Posterior vena cava (tissue), 2 donors: ENCODE measurements at regions of chr4 and their contacts with region 1.

Region 1: DNA sequence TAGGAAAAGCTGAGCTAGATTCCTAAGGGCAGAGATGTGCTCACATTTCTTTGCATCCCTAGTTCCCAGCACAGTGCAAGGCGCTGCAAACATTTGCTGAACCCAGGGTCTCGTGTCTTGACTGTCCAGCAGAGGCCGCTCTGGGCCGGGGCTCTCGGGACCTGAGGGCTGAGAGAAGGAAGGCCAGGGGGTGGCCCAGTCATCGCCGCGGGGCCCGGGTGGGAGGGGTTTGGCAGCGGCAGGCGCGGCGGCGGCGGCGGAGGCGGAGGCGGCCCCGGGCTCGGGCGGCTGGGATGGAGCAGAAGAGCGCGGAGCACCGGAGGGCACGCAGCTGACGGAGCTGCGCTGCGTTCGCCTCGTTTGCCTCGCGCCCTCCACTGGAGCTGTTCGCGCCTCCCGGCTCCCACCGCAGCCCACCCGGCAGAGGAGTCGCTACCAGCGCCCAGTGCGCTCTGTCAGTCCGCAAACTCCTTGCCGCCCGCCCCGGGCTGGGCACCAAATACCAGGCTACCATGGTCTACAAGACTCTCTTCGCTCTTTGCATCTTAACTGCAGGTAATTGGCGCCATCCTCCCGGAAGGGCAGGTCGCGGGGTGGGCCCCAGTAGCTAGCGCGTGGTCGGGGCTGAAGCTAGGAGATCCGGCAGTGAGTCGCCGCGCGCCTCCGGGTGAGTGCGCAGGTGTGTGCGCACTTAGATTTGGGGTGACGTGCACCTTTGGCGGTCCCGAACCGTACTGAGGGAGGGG is at the start of gene PARM1:
- DNase-seq: peak; percentile 98
- total RNA-seq, gene PARM1: 94.5 to 113 TPM

Region 2: DNA sequence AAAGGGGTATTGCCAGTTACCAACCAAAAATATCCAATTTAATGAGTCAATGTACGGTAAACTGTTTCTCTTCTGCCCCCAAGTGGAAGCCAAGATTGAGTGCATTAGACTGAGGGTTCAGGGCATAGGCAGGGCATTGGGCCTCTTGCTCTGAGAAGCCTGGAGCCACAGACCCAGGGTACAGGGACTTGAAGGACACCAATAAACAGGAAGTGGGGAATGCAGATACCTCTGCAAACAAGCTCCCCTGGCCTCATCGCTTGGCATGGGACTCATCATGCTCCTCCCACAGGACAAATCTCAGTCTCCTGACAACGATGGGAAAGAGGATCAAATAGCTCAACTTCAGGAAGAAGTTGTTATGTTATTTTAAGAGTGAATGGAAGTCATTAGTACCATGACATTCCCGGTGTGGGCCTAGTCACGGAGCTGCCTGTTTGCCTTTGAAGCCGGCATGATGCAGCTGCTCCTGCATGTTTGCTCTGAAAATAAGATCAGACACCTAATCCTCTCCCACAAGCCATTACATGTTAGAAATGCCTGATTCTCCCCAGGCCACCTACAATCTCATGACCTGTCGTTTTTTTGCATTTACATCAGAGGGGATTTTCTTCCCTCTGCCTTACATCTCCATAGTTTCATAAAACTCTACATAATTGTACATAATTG is 357.1 kb after region 1 on chr4:
- intact Hi-C with region 1: loop called in 1 of 2 experiments (anchors 10 kb)
- DNase-seq: no peak

Region 3: GRCh38 chr4:75432683-75433082 is 499.7 kb after region 1 on chr4:
- intact Hi-C with region 1: no loop called
- DNase-seq: no peak

Region 4: DNA sequence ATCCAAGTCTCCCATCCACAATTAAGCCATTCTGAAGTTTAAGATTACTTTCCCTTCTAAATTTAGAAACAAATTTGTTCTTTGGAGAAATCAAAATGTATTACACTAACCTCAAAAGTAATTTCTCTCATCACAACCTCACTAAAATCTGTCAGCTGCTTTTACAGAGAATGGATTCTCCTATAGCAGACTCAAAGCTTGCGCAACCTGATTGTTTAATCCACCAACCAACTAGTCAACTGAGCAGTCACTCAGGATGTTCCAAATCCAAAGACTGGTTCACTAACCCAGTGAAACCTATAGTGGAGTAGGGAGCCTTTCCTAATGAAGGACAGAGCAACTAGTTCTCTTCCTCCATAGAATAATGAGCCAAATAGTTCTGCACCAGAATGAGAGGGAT is 536.9 kb after region 1 on chr4:
- intact Hi-C with region 1: loop called in 1 of 2 experiments (anchors 5 kb)
- DNase-seq: no peak

Region 5: DNA sequence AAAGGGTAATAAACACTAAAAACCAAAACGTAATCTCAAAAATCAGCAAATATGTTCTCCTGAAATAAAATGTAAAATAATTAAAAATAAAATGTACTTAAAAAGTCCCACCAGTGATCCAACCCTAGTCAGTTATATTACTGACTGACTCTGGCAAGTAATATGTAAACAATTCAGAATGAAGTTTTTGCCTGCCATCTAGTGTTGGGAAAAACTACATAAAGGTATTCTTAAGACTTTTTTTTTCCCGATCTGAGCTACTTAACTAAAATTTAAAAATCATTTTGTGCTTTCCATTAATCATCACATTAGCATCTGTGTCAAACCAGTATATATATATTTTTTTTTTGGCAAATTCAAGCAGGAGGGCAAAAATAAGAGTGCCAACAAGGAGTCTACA is 557.2 kb after region 1 on chr4:
- intact Hi-C with region 1: loop called in 1 of 2 experiments (anchors 5 kb)
- DNase-seq: no peak